Mammary epithelial cell (primary cell): ENCODE measurements at regions of chr2 and their contacts with region 1.

Region 1: GRCh38 chr2:168346725-168347477 is 99.5 kb upstream of the STK39 start:
- DNase-seq: peak; percentile 52
- H3K4me3 ChIP-seq: peak overlapping the region; percentile 62 to 72 (median 66)
- H3K27ac ChIP-seq: peak overlapping the region; percentile 60
- H3K4me1 ChIP-seq: peaks cover 9% of the 10 kb centered on the region
- H3K27me3 ChIP-seq: no peaks in the 10 kb centered on the region
- CTCF ChIP-seq: peak; percentile 76

Region 2: DNA sequence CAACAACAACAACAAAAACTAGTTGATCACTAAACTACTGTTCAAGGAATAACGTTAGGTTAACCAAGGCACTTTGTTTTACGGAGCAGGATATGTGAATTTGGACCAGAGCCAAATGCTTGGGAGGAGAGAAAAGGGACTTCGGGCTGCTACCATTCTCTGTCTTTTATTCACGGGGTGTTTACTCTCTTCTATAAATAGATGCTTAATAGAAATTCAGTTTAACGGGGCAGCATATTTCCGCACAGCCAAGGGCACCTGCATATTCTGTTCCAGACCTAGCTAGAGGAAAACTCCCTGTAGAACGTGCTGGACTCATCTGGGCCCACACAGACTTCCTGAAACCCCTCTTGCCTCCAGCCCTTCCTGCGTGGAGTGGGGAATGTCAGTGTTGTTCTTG is 63.7 kb before region 1 on chr2:
- CTCF ChIA-PET with region 1: no interaction called
- dilution Hi-C with region 1: no loop called
- in situ Hi-C with region 1: no loop called
- intact Hi-C with region 1: no loop called
- DNase-seq: no peak
- H3K4me3 ChIP-seq: no peak overlapping the region
- H3K27ac ChIP-seq: no peak overlapping the region
- H3K4me1 ChIP-seq: no peaks in the 10 kb centered on the region
- H3K27me3 ChIP-seq: no peaks in the 10 kb centered on the region
- CTCF ChIP-seq: no peak

Region 3: GRCh38 chr2:168443818-168444217 is 96.9 kb after region 1 on chr2:
- CTCF ChIA-PET with region 1: no interaction called
- dilution Hi-C with region 1: no loop called
- in situ Hi-C with region 1: no loop called
- intact Hi-C with region 1: loop called (anchors 5 kb)
- DNase-seq: peak; percentile 42
- H3K4me3 ChIP-seq: no peak overlapping the region
- H3K27ac ChIP-seq: no peak overlapping the region
- H3K4me1 ChIP-seq: no peaks in the 10 kb centered on the region
- H3K27me3 ChIP-seq: no peaks in the 10 kb centered on the region
- CTCF ChIP-seq: peak; percentile 25 to 59

Region 4: GRCh38 chr2:168583064-168583709 is 236.3 kb after region 1 on chr2:
- CTCF ChIA-PET with region 1: interaction called, 14 read pairs
- dilution Hi-C with region 1: no loop called
- in situ Hi-C with region 1: no loop called
- intact Hi-C with region 1: no loop called
- DNase-seq: no peak
- H3K4me3 ChIP-seq: no peak overlapping the region
- H3K27ac ChIP-seq: peak overlapping the region; percentile 96
- H3K4me1 ChIP-seq: peaks cover 31% of the 10 kb centered on the region
- H3K27me3 ChIP-seq: no peaks in the 10 kb centered on the region
- CTCF ChIP-seq: no peak

Region 5: GRCh38 chr2:168687314-168687713 is 340.4 kb after region 1 on chr2:
- CTCF ChIA-PET with region 1: no interaction called
- dilution Hi-C with region 1: no loop called
- in situ Hi-C with region 1: loop called in 1 of 2 experiments (anchors 25 kb)
- intact Hi-C with region 1: loop called (anchors 1 kb)
- DNase-seq: no peak
- H3K4me3 ChIP-seq: no peak overlapping the region
- H3K27ac ChIP-seq: no peak overlapping the region
- H3K4me1 ChIP-seq: peaks cover 43% of the 10 kb centered on the region
- H3K27me3 ChIP-seq: no peaks in the 10 kb centered on the region
- CTCF ChIP-seq: peak in 1 of 2 donors; percentile 32

Region 6: DNA sequence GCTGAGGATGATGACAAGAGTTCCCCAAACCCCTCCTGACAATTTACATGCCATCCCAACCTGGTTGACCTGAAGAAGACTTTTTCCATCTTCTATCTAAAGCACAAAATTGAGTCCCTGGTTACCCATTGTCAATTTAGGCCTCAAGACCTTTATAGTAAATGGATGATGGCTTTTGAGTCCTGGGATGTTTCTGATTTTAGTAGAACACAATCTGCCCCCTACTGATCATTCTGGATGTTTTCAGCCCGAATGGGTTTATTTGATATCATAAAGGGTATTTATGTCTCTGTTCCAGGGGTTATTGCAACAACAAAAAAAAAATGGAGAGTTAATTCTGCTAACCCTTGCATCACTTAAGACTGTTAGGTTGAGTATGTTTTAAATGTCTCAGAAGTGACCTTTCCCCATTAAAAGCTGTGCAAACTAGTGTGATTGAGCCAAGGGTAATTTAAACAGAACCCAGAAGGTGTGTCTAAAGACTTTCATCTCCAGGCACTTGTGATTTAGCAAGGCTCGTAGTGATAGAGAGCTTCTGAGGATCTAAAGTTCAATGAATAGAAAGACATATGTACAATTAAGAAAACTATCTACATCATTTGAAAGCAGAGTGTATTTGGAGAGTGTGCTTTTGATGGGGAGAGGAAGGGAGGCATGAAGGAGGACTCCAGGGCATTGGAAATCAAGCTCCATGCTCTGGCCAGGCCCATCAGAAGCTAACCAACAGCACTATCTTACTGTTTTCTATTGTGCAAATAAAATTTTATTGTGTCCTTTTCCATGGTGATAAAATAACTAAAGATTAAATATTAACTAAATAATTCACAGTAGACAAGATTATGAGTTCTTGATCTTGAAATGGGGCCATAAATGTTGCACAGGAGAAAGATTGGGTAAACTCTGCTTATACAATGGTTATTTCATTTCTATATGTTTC is 358.9 kb after region 1 on chr2:
- CTCF ChIA-PET with region 1: no interaction called
- dilution Hi-C with region 1: no loop called
- in situ Hi-C with region 1: loop called in 1 of 2 experiments (anchors 10 kb)
- intact Hi-C with region 1: loop called (anchors 1 kb)
- DNase-seq: no peak
- H3K4me3 ChIP-seq: no peak overlapping the region
- H3K27ac ChIP-seq: no peak overlapping the region
- H3K4me1 ChIP-seq: peaks cover 11% of the 10 kb centered on the region
- H3K27me3 ChIP-seq: no peaks in the 10 kb centered on the region
- CTCF ChIP-seq: peak; percentile 23

Region 7: DNA sequence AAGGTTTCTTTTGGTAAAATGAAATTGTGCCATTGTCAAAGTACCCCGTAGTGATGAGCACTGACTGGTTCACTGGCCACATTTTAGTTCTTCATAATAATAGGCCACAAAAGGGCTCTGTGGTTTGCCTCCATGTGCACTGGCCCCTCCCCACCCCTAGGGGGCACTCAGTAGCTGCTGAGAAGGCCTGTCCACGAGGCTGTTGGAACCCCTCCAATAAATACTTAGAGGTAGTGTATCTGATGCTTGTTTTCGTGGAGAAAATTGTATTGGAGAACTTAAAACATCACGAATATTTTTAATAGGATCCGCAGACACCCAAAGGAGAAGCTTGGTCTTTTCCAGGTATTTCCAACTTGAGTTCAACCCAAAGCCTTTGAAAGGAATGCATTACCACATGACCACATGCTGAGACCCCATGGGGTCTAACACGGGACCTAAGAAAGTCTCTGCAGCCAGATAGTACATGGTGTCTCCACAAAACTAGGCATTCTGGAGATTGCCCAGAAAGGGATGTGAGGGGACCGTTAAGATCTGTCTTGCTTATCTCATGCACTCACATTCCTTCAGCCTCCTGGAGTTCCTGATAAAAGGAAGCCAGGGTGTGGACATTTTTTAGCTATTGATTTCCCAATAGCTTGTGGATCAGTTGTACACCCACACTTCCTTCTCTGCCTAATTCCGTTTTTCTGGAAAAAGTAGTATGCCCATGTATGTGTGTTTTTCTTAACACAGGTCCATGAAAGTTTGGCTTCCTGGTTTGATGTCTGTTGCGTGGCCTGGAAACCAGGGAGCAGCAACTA is 427.0 kb after region 1 on chr2:
- CTCF ChIA-PET with region 1: no interaction called
- dilution Hi-C with region 1: loop called (anchors 25 kb)
- in situ Hi-C with region 1: no loop called
- intact Hi-C with region 1: loop called (anchors 5 kb)
- DNase-seq: peak; percentile 40
- H3K4me3 ChIP-seq: no peak overlapping the region
- H3K27ac ChIP-seq: no peak overlapping the region
- H3K4me1 ChIP-seq: no peaks in the 10 kb centered on the region
- H3K27me3 ChIP-seq: no peaks in the 10 kb centered on the region
- CTCF ChIP-seq: peak; percentile 88 to 89

Region 8: GRCh38 chr2:168912901-168913369 is 566.0 kb after region 1 on chr2:
- CTCF ChIA-PET with region 1: no interaction called
- dilution Hi-C with region 1: no loop called
- in situ Hi-C with region 1: loop called (anchors 5 to 10 kb)
- intact Hi-C with region 1: no loop called
- DNase-seq: no peak
- H3K4me3 ChIP-seq: peak overlapping the region in 2 of 3 experiments; percentile 22 to 28
- H3K27ac ChIP-seq: no peak overlapping the region
- H3K4me1 ChIP-seq: no peaks in the 10 kb centered on the region
- H3K27me3 ChIP-seq: peaks cover 1% of the 10 kb centered on the region
- CTCF ChIP-seq: no peak